Naive thymus-derived CD4-positive, alpha-beta T cell (primary cell): ENCODE measurements at regions of chr1 and their contacts with region 1.

Region 1: GRCh38 chr1:117605774-117606648 is at the start of gene TENT5C:
- DNase-seq: peak; percentile 98 to 99 (median 99)
- ATAC-seq: peak; percentile 97
- H3K4me3 ChIP-seq: peak within 1 kb of the TSS; percentile 79
- H3K4me3 Mint-ChIP-seq: peak within 1 kb of the TSS; percentile 94 to 100 (median 98)
- H3K27ac ChIP-seq: peak within 1 kb of the TSS; percentile 86
- H3K27ac Mint-ChIP-seq: peak within 1 kb of the TSS; percentile 96 to 99 (median 97)
- H3K4me1 ChIP-seq: peaks cover 20 to 22% of the 10 kb centered on the region in 2 donors
- H3K4me1 Mint-ChIP-seq: peaks cover 25 to 44% (median 32%) of the 10 kb centered on the region in 7 donors
- H3K27me3 ChIP-seq: no peaks in the 10 kb centered on the region
- H3K27me3 Mint-ChIP-seq: peaks cover 0 to 42% (median 0%) of the 10 kb centered on the region in 5 donors
- total RNA-seq, gene TENT5C: 3.7 to 47.0 (median 12.9) TPM

Region 2: DNA sequence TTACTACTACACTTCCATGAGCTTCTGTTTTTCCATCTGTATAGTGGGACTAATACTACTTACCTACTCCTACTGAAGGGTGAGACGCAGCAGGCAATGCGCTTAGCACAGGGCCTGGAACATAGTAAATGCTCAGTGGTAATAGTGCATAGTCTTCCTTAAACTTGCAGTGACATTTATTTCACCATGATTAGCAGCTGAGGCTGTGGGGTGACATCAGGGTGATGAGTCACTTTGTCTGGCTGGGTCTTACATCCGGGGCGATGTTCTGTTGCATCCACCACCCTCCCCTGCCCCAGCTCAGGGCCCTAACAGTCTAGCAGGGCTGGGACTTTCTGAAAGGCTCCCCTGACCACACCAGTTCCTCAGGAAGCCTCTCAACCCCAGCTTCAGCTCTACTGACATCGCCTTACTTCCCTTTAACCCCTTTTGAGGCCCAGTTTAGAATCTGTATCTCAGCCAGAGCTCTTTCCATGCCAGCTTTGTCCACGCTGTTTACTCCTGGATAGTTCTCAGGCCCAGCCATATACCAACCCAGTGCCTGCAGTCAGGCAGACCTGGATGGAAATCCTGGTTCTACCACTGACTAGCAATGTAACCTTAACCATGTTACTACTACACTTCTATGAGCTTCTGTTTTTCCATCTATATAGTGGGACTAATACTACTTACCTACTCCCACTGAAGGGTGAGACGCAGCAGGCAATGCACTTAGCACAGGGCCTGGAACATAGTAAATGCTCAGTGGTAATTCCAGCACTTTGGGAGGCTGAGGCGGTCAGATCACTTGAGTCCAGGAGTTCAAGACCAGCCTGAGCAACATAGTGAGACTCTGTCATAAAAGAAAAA is 1101.5 kb before region 1 on chr1:
- CTCF ChIA-PET with region 1: no interaction called
- POLR2A ChIA-PET with region 1: no interaction called
- intact Hi-C with region 1: loop called in 1 of 2 experiments (anchors 10 kb)
- DNase-seq: peak; percentile 49 to 86 (median 73)
- ATAC-seq: peak; percentile 96
- H3K4me3 ChIP-seq: peak overlapping the region; percentile 1
- H3K4me3 Mint-ChIP-seq: peak overlapping the region in 8 of 10 donors; percentile 11 to 77 (median 48)
- H3K27ac ChIP-seq: peak overlapping the region; percentile 48
- H3K27ac Mint-ChIP-seq: peak overlapping the region; percentile 65 to 92 (median 77)
- H3K4me1 ChIP-seq: peaks cover 20 to 49% of the 10 kb centered on the region in 2 donors
- H3K4me1 Mint-ChIP-seq: peaks cover 21 to 89% (median 34%) of the 10 kb centered on the region in 7 donors
- H3K27me3 ChIP-seq: no peaks in the 10 kb centered on the region
- H3K27me3 Mint-ChIP-seq: no peaks in the 10 kb centered on the region

Region 3: DNA sequence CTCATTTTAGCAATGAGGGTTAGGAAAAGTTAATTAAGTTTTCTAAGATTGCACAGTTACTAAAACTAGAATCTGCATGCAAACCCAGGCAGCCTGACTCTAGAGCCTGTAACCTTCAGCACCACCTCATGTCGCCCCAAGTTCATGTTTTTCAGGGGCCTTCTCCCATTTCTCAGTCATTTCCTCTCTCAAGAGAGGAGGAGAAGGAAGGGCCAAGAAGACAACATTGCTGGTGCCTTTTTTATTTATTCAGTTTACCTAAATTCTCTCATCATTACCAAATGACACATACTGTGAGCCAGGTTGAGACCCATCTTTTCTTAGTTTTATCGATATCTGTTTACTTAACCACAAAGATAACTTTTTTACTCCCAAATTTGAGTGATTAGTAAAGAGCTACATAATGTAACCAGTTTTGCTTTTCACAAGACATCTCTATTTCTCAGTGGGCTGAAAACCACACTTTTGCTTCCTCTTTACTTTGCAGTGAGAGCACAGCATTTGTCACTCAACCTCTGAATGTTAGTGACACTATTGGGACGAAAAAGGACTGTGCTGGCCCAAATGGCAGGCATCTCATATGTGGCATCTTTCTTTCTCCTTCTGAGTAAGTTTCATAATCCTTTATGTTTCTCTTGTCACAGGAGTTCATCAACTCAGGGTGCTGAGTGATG is 604.6 kb before region 1 on chr1 and contains the start of gene CD101:
- CTCF ChIA-PET with region 1: no interaction called
- POLR2A ChIA-PET with region 1: no interaction called
- intact Hi-C with region 1: loop called in 1 of 2 experiments (anchors 10 kb)
- DNase-seq: peak in 4 of 9 donors; percentile 18 to 39 (median 32)
- ATAC-seq: peak; percentile 72
- H3K4me3 ChIP-seq: peak within 1 kb of the TSS; percentile 17
- H3K4me3 Mint-ChIP-seq: peak within 1 kb of the TSS; percentile 30 to 72 (median 60)
- H3K27ac ChIP-seq: peak within 1 kb of the TSS; percentile 60
- H3K27ac Mint-ChIP-seq: peak within 1 kb of the TSS; percentile 84 to 95 (median 87)
- H3K4me1 ChIP-seq: peaks cover 0 to 48% of the 10 kb centered on the region in 2 donors
- H3K4me1 Mint-ChIP-seq: peaks cover 36 to 72% (median 59%) of the 10 kb centered on the region in 7 donors
- H3K27me3 ChIP-seq: no peaks in the 10 kb centered on the region
- H3K27me3 Mint-ChIP-seq: no peaks in the 10 kb centered on the region
- total RNA-seq, gene CD101: 3.9 to 15.4 (median 10.3) TPM

Region 4: GRCh38 chr1:117512743-117513321 is 93.2 kb before region 1 on chr1:
- CTCF ChIA-PET with region 1: no interaction called
- POLR2A ChIA-PET with region 1: no interaction called
- intact Hi-C with region 1: loop called in 1 of 2 experiments (anchors 5 kb)
- DNase-seq: peak in 5 of 9 donors; percentile 22 to 34 (median 25)
- ATAC-seq: peak; percentile 57
- H3K4me3 ChIP-seq: no peak overlapping the region
- H3K4me3 Mint-ChIP-seq: no peak overlapping the region
- H3K27ac ChIP-seq: no peak overlapping the region
- H3K27ac Mint-ChIP-seq: no peak overlapping the region
- H3K4me1 ChIP-seq: no peaks in the 10 kb centered on the region
- H3K4me1 Mint-ChIP-seq: peaks cover 0 to 3% (median 0%) of the 10 kb centered on the region in 7 donors
- H3K27me3 ChIP-seq: no peaks in the 10 kb centered on the region
- H3K27me3 Mint-ChIP-seq: no peaks in the 10 kb centered on the region

Region 5: DNA sequence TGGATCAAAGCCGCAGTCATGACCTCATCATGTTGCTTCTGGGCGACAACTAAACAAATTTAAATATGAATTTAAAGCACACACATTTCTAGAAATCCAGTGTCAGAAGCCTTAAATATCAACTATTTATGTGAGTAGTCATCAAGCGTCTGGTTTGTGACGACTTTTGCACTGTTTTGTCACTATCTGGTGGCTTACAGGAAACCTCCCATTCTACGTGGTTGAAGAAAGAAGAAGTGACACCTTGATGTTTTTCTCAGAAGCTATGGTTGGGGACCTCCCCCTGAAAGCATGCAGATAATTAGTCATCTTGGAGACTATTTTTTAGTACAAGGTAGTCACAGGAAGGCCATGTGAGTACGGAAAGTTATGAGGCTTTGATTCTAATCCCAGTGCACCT is 58.3 kb after region 1 on chr1:
- CTCF ChIA-PET with region 1: interaction called, 6 read pairs
- POLR2A ChIA-PET with region 1: interaction called, 18 read pairs
- intact Hi-C with region 1: loop called (anchors 1 kb)
- DNase-seq: peak in 8 of 9 donors; percentile 49 to 87 (median 83)
- ATAC-seq: peak; percentile 88
- H3K4me3 ChIP-seq: peak overlapping the region; percentile 5
- H3K4me3 Mint-ChIP-seq: peak overlapping the region in 7 of 10 donors; percentile 19 to 60 (median 37)
- H3K27ac ChIP-seq: no peak overlapping the region
- H3K27ac Mint-ChIP-seq: peak overlapping the region; percentile 74 to 97 (median 93)
- H3K4me1 ChIP-seq: peaks cover 38 to 71% of the 10 kb centered on the region in 2 donors
- H3K4me1 Mint-ChIP-seq: peaks cover 35 to 81% (median 66%) of the 10 kb centered on the region in 7 donors
- H3K27me3 ChIP-seq: no peaks in the 10 kb centered on the region
- H3K27me3 Mint-ChIP-seq: peaks cover 0 to 15% (median 4%) of the 10 kb centered on the region in 5 donors

Region 6: GRCh38 chr1:117758444-117759316 is 152.7 kb after region 1 on chr1:
- CTCF ChIA-PET with region 1: interaction called, 3 read pairs
- POLR2A ChIA-PET with region 1: no interaction called
- intact Hi-C with region 1: loop called (anchors 1 to 2 kb)
- DNase-seq: peak; percentile 35 to 68 (median 61)
- ATAC-seq: peak; percentile 95
- H3K4me3 ChIP-seq: peak overlapping the region; percentile 59
- H3K4me3 Mint-ChIP-seq: peak overlapping the region; percentile 66 to 93 (median 84)
- H3K27ac ChIP-seq: no peak overlapping the region
- H3K27ac Mint-ChIP-seq: peak overlapping the region in 4 of 9 donors; percentile 3 to 47 (median 42)
- H3K4me1 ChIP-seq: peaks cover 0 to 3% of the 10 kb centered on the region in 2 donors
- H3K4me1 Mint-ChIP-seq: peaks cover 0 to 16% (median 6%) of the 10 kb centered on the region in 7 donors
- H3K27me3 ChIP-seq: no peaks in the 10 kb centered on the region
- H3K27me3 Mint-ChIP-seq: peaks cover 0 to 43% (median 5%) of the 10 kb centered on the region in 5 donors